IMR-90 (cell line): ENCODE measurements at regions of chrX and their contacts with region 1.

Region 1: GRCh38 chrX:50905334-50905733 is 5.2 kb upstream of the BMP15 start:
- DNase-seq: no peak
- ATAC-seq: no peak
- H3K4me3 ChIP-seq: no peak overlapping the region
- H3K27ac ChIP-seq: no peak overlapping the region
- H3K4me1 ChIP-seq: no peaks in the 10 kb centered on the region
- H3K27me3 ChIP-seq: peaks cover 8% of the 10 kb centered on the region
- CTCF ChIP-seq: no peak
- POLR2A ChIP-seq: no peak
- RAD21 ChIP-seq: no peak

Region 2: DNA sequence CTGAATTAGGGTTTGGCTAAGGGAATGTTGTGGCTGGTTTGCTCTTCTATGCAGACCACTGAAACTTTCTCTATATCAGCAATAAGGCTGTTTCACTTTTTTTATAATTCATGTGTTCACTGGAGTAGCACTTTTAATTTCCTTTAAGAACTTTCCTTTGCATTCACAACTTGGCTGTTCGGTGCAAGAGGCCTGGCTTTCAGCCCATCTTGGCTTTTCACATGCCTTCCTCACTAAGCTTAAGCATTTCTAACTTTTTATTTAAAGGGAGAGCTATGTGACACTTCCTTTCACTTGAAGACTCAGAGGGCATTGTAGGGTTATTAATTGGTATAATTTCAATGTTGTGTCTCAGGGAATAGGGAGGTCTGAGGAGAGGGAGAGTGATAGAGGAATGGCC is 233.7 kb before region 1 on chrX:
- CTCF ChIA-PET with region 1: no interaction called
- POLR2A ChIA-PET with region 1: no interaction called
- dilution Hi-C with region 1: no loop called
- in situ Hi-C with region 1: no loop called
- intact Hi-C with region 1: no loop called
- DNase-seq: no peak
- ATAC-seq: no peak
- H3K4me3 ChIP-seq: no peak overlapping the region
- H3K27ac ChIP-seq: no peak overlapping the region
- H3K4me1 ChIP-seq: no peaks in the 10 kb centered on the region
- H3K27me3 ChIP-seq: no peaks in the 10 kb centered on the region; the same call in 1 of the 2 replicates
- CTCF ChIP-seq: no peak
- POLR2A ChIP-seq: no peak
- RAD21 ChIP-seq: no peak

Region 3: GRCh38 chrX:50747471-50747900 is 157.8 kb before region 1 on chrX:
- CTCF ChIA-PET with region 1: interaction called, 8 read pairs
- POLR2A ChIA-PET with region 1: no interaction called
- dilution Hi-C with region 1: no loop called
- in situ Hi-C with region 1: no loop called
- intact Hi-C with region 1: loop called (anchors 1 kb)
- DNase-seq: peak; percentile 45
- ATAC-seq: peak; percentile 77
- H3K4me3 ChIP-seq: no peak overlapping the region
- H3K27ac ChIP-seq: no peak overlapping the region
- H3K4me1 ChIP-seq: no peaks in the 10 kb centered on the region
- H3K27me3 ChIP-seq: no peaks in the 10 kb centered on the region; the same call in 1 of the 2 replicates
- CTCF ChIP-seq: peak; percentile 64
- POLR2A ChIP-seq: no peak
- RAD21 ChIP-seq: peak; percentile 71

Region 4: GRCh38 chrX:50799531-50799961 is 105.8 kb before region 1 on chrX:
- CTCF ChIA-PET with region 1: no interaction called
- POLR2A ChIA-PET with region 1: no interaction called
- dilution Hi-C with region 1: no loop called
- in situ Hi-C with region 1: no loop called
- intact Hi-C with region 1: no loop called
- DNase-seq: peak; percentile 56
- ATAC-seq: peak; percentile 72
- H3K4me3 ChIP-seq: no peak overlapping the region
- H3K27ac ChIP-seq: no peak overlapping the region
- H3K4me1 ChIP-seq: no peaks in the 10 kb centered on the region
- H3K27me3 ChIP-seq: no peaks in the 10 kb centered on the region; the same call in none of the 2 replicates
- CTCF ChIP-seq: no peak
- POLR2A ChIP-seq: no peak
- RAD21 ChIP-seq: no peak

Region 5: GRCh38 chrX:50812995-50813826 is 92.1 kb before region 1 on chrX:
- CTCF ChIA-PET with region 1: no interaction called
- POLR2A ChIA-PET with region 1: no interaction called
- dilution Hi-C with region 1: no loop called
- in situ Hi-C with region 1: no loop called
- intact Hi-C with region 1: loop called (anchors 5 kb)
- DNase-seq: peak; percentile 46
- ATAC-seq: peak; percentile 61
- H3K4me3 ChIP-seq: peak overlapping the region; percentile 50
- H3K27ac ChIP-seq: no peak overlapping the region; the same call in 1 of the 2 replicates
- H3K4me1 ChIP-seq: no peaks in the 10 kb centered on the region
- H3K27me3 ChIP-seq: no peaks in the 10 kb centered on the region; the same call in 1 of the 2 replicates
- CTCF ChIP-seq: no peak
- POLR2A ChIP-seq: no peak
- RAD21 ChIP-seq: no peak

Region 6: DNA sequence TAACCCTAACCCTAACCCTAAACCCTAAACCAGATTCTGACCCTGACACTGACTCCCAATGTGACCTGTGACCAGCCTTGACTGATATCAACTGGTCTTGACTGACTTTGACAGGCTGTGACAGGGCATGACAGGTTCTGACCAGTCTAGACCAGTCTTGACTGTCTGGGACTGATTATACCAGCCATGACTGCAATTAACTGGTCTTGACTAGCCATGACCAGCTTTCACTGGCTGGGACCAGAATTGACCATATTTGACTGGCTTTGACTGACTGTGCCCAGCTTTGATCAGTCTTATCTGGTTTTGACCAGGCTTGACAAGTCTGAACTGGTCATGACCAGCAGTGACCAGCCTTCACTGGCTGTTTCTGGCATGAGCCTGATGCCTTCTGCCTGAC is 100.7 kb after region 1 on chrX:
- CTCF ChIA-PET with region 1: no interaction called
- POLR2A ChIA-PET with region 1: no interaction called
- dilution Hi-C with region 1: no loop called
- in situ Hi-C with region 1: no loop called
- intact Hi-C with region 1: no loop called
- DNase-seq: no peak
- ATAC-seq: no peak
- H3K4me3 ChIP-seq: no peak overlapping the region
- H3K27ac ChIP-seq: no peak overlapping the region
- H3K4me1 ChIP-seq: no peaks in the 10 kb centered on the region
- H3K27me3 ChIP-seq: peaks cover 2% of the 10 kb centered on the region
- CTCF ChIP-seq: no peak
- POLR2A ChIP-seq: no peak
- RAD21 ChIP-seq: no peak

Region 7: DNA sequence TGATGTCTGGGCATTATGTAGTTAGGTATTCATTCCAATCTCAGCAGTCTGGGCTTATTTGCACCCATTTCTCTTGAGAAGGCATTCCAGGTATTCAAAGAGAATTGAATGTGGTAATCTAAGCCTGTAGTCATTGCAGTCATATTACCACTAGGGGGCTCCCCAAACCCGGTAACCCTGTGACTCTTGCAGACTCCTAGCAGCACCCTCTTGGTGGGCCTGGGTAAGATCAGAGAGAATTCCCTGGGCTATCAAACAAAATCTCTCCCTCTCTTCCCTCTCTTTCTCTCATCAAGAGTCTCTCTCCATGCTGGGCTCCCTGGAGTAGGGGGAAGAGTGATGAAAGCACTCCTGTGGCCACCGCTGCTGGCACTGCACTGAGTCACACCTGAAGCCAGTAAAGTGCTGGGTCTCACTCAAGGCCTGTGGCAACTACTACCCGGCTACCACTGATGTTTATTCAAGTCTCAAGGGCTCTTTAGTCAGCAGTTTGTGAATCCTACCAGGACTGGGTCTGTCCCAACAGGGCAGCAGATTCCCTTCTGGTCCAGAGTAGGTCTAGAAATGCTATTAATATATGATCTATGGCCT is 239.6 kb after region 1 on chrX:
- CTCF ChIA-PET with region 1: no interaction called
- POLR2A ChIA-PET with region 1: no interaction called
- dilution Hi-C with region 1: no loop called
- in situ Hi-C with region 1: no loop called
- intact Hi-C with region 1: no loop called
- DNase-seq: peak; percentile 10
- ATAC-seq: peak; percentile 48; the same call in 1 of the 2 replicates
- H3K4me3 ChIP-seq: no peak overlapping the region
- H3K27ac ChIP-seq: no peak overlapping the region
- H3K4me1 ChIP-seq: no peaks in the 10 kb centered on the region
- H3K27me3 ChIP-seq: no peaks in the 10 kb centered on the region
- CTCF ChIP-seq: peak; percentile 51
- POLR2A ChIP-seq: no peak
- RAD21 ChIP-seq: peak; percentile 35